ENCODE measurements at regions of chr6 and their contacts with region 1.

Region 1: DNA sequence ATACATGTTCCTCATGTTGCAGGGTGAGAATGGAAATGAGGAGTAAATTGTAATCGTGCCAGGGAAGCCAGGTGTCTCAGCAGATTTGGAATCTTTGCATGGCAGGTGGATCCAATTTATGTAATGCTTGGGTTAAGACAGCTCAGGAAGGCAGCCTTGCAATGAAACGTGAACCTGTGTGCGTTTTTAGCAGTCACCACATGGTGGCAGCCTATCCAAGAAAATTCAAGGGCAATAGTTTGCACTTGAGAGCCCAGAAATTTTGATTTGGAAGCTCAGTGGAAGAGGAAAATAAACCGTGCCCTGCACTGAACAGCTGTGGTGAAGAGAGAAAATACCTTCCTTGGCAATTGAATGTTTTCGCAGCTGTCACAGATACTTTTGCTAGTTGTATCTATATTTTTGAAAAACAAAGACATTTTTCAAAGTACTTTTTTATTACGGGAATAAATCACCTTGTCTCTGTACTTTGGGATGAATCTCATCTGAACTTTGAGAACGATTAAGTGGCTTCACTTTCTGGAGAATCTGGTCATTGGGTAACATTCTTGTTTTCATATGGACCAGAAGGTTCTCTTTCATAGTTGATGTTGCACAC is 26.5 kb downstream of the MTHFD1L start:
- DNase-seq: peak in 1 of 2 donors; percentile 83
- H3K4me3 ChIP-seq: no peak overlapping the region
- H3K27ac ChIP-seq: peak overlapping the region in 1 of 2 donors; percentile 14
- H3K4me1 ChIP-seq: peaks cover 4 to 6% of the 10 kb centered on the region in 2 donors
- H3K27me3 ChIP-seq: no peaks in the 10 kb centered on the region
- CTCF ChIP-seq: peak; percentile 74 to 82 (median 82)

Region 2: GRCh38 chr6:150177952-150178520 is 714.0 kb before region 1 on chr6:
- intact Hi-C with region 1: no loop called
- DNase-seq: no peak
- H3K4me3 ChIP-seq: no peak overlapping the region
- H3K27ac ChIP-seq: no peak overlapping the region
- H3K4me1 ChIP-seq: no peaks in the 10 kb centered on the region
- H3K27me3 ChIP-seq: no peaks in the 10 kb centered on the region
- CTCF ChIP-seq: no peak

Region 3: GRCh38 chr6:150928882-150929281 is 36.9 kb after region 1 on chr6:
- intact Hi-C with region 1: loop called (anchors 5 kb)
- DNase-seq: peak in 1 of 2 donors; percentile 50
- H3K4me3 ChIP-seq: no peak overlapping the region
- H3K27ac ChIP-seq: peak overlapping the region; percentile 10 to 18
- H3K4me1 ChIP-seq: peaks cover 9 to 37% of the 10 kb centered on the region in 2 donors
- H3K27me3 ChIP-seq: no peaks in the 10 kb centered on the region
- CTCF ChIP-seq: peak in 1 of 3 experiments; percentile 15

Region 4: GRCh38 chr6:151004415-151005024 is 112.5 kb after region 1 on chr6:
- intact Hi-C with region 1: loop called (anchors 5 kb)
- DNase-seq: no peak
- H3K4me3 ChIP-seq: no peak overlapping the region
- H3K27ac ChIP-seq: peak overlapping the region; percentile 38 to 48
- H3K4me1 ChIP-seq: peaks cover 0 to 16% of the 10 kb centered on the region in 2 donors
- H3K27me3 ChIP-seq: no peaks in the 10 kb centered on the region
- CTCF ChIP-seq: no peak

Region 5: GRCh38 chr6:151323791-151324487 is 432.0 kb after region 1 on chr6:
- intact Hi-C with region 1: loop called (anchors 2 kb)
- DNase-seq: peak; percentile 38 to 92
- H3K4me3 ChIP-seq: peak overlapping the region in 1 of 2 donors; percentile 69
- H3K27ac ChIP-seq: peak overlapping the region; percentile 58 to 59
- H3K4me1 ChIP-seq: peaks cover 5 to 11% of the 10 kb centered on the region in 2 donors
- H3K27me3 ChIP-seq: no peaks in the 10 kb centered on the region
- CTCF ChIP-seq: peak; percentile 92 to 97 (median 95)

Region 6: GRCh38 chr6:151339369-151339768 is 447.4 kb after region 1 on chr6:
- intact Hi-C with region 1: loop called (anchors 2 kb)
- DNase-seq: no peak
- H3K4me3 ChIP-seq: no peak overlapping the region
- H3K27ac ChIP-seq: no peak overlapping the region
- H3K4me1 ChIP-seq: no peaks in the 10 kb centered on the region
- H3K27me3 ChIP-seq: no peaks in the 10 kb centered on the region
- CTCF ChIP-seq: no peak

Measured in ascending aorta (tissue), 2 donors.